ENCODE measurements at regions of chr10 and their contacts with region 1.

Region 1: DNA sequence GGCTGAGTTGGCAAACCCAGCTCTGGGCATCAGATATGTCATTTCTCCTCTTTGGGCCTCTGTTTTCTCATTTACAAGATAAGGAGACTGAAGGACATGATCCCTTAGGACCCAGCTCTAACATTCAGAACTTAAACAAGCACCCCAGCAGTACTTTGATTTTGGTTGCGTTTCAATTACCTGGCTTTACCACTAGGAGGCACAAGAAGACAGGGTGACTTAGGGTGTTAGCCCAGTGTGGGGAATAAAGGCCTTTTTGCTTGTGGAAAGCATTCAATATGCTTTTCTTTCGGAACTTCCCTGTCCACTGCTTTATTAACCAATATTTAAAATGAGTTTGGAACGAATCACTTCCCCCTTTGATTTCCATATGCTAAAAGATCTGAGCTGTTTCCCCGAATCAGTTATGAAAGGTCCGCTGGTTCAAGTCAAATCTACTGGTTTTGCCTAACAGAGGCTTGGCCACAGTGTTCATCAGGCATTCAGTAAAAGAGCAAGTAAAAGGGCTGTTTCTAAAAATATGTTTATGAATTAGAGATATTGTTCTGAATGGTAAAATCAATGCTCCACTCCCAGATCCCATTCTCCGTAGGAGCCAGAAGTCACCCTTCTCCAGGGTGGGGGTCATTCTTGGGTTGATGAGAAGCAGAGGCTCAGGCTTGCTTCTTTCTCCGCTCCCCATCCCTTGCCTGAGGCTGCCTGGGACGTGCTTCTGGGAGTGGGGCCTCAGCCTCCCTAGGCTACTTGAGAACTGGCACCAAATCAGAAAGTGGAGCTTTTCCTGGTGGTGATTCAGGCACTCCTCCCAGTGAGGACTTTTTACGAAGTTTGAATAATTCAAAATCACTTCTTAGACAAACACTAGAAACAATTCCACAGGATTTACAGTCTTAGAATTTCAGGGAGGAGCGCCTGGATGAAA is 105.5 kb downstream of the MYOF start:
- DNase-seq: no peak
- ATAC-seq: peak; percentile 90
- H3K4me3 Mint-ChIP-seq: no peak overlapping the region
- H3K27ac Mint-ChIP-seq: no peak overlapping the region
- H3K4me1 Mint-ChIP-seq: peaks cover 4% of the 10 kb centered on the region; the same call in 1 of the 2 replicates
- H3K27me3 Mint-ChIP-seq: no peaks in the 10 kb centered on the region
- CTCF ChIP-seq: peak; percentile 93

Region 2: GRCh38 chr10:93386631-93387369 is 10.2 kb after region 1 on chr10:
- CTCF ChIA-PET with region 1: interaction called, 19 read pairs
- POLR2A ChIA-PET with region 1: no interaction called
- DNase-seq: no peak
- ATAC-seq: peak; percentile 32; the same call in 1 of the 2 replicates
- H3K4me3 Mint-ChIP-seq: no peak overlapping the region
- H3K27ac Mint-ChIP-seq: no peak overlapping the region
- H3K4me1 Mint-ChIP-seq: peaks cover 21% of the 10 kb centered on the region
- H3K27me3 Mint-ChIP-seq: no peaks in the 10 kb centered on the region; the same call in 1 of the 2 replicates
- CTCF ChIP-seq: no peak

Region 3: GRCh38 chr10:93420091-93420490 is 43.5 kb after region 1 on chr10:
- CTCF ChIA-PET with region 1: interaction called, 12 read pairs
- POLR2A ChIA-PET with region 1: no interaction called
- DNase-seq: no peak
- ATAC-seq: peak; percentile 32
- H3K4me3 Mint-ChIP-seq: no peak overlapping the region
- H3K27ac Mint-ChIP-seq: peak overlapping the region; percentile 52; the same call in 1 of the 2 replicates
- H3K4me1 Mint-ChIP-seq: peaks cover 39% of the 10 kb centered on the region
- H3K27me3 Mint-ChIP-seq: no peaks in the 10 kb centered on the region
- CTCF ChIP-seq: no peak

Region 4: DNA sequence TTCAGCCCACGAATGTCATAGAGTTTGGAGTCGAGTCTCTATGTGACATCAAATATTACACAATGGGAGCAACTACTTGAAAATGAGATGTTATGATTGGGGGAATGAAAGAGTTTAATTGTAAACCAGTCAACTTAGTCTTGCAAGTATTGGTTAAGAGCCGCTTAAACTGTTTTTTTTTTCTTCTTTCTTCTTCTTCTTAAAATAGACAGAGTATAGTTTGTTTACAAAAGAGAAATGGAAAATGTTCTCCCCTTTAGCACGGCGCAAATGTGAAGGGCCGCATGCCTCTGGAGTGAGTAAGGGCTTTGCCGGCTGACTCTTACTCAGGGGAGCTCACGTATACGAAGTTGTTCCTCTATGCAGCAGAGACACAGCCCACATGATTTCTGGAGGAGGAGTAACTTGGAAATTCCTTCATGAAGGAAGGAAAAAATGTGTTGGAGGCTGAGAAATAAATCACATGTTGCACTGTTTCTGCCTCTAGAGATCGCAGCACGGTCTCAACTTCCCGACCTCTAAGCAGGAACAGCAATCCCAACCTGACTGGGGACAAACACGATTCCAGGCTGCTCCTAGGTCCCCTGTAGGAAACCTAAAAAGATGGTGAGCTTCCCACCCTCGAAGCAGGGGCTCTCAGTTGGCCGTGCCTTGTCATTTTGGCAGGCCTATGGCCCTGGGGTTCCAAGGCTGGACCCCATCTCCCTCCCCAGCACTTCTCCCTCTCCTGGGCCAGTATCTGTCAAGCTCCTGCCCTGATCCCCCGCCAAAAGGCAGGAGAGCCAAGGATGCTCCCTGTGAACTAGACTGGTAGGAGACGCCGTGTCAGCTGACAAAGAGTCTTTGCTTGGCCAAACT is 60.7 kb after region 1 on chr10:
- CTCF ChIA-PET with region 1: interaction called, 15 read pairs
- POLR2A ChIA-PET with region 1: no interaction called
- DNase-seq: peak; percentile 43
- ATAC-seq: peak; percentile 48
- H3K4me3 Mint-ChIP-seq: peak overlapping the region; percentile 68
- H3K27ac Mint-ChIP-seq: peak overlapping the region; percentile 98
- H3K4me1 Mint-ChIP-seq: peaks cover 78% of the 10 kb centered on the region
- H3K27me3 Mint-ChIP-seq: no peaks in the 10 kb centered on the region; the same call in 1 of the 2 replicates
- CTCF ChIP-seq: no peak

Region 5: GRCh38 chr10:93471110-93471651 is 94.5 kb after region 1 on chr10:
- CTCF ChIA-PET with region 1: interaction called, 12 read pairs
- POLR2A ChIA-PET with region 1: no interaction called
- DNase-seq: no peak
- ATAC-seq: peak; percentile 34; the same call in 1 of the 2 replicates
- H3K4me3 Mint-ChIP-seq: no peak overlapping the region
- H3K27ac Mint-ChIP-seq: no peak overlapping the region
- H3K4me1 Mint-ChIP-seq: peaks cover 12% of the 10 kb centered on the region
- H3K27me3 Mint-ChIP-seq: no peaks in the 10 kb centered on the region
- CTCF ChIP-seq: no peak

Region 6: DNA sequence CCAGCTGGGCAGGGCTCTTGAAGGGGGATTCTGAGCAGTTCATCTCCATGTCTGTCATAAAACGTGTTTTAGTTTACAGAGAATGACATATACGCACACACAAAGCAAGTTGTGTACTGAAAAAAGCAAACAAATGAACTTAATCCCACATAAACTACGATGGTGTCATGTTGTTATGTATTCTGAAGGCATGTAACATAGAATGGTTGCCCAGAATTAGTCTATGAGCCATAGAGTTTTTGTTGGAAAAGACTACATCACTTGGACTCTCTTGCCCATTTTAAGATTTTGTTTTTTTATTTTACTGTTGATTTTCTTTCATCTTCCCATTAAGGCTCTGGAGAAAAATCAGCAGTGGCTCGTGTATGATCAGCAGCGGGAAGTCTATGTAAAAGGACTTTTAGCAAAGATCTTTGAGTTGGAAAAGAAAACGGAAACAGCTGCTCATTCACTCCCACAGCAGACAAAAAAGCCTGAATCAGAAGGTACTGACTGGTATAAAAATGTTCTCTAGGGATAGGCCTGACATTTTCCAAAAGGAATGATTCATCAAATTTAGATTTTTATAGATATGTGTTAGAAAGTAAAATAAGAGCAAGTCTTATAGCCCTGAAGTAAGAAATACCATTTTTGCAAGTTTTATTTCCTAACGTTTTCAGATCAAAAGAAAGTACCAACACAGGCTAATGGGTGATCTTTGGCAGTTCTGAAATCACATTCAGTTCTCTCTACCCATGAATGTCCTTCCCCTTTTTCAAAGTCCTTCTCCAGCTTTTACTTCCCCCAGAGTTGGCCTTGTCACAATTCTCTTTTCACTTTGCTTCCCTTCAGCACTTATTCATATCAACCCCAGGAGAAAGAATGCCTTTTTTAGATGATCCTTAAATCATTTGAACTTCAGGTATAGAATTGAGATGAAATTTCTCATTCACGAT is 138.7 kb after region 1 on chr10:
- CTCF ChIA-PET with region 1: interaction called, 67 read pairs
- POLR2A ChIA-PET with region 1: no interaction called
- DNase-seq: no peak
- ATAC-seq: no peak
- H3K4me3 Mint-ChIP-seq: no peak overlapping the region
- H3K27ac Mint-ChIP-seq: no peak overlapping the region
- H3K4me1 Mint-ChIP-seq: peaks cover 5% of the 10 kb centered on the region
- H3K27me3 Mint-ChIP-seq: no peaks in the 10 kb centered on the region
- CTCF ChIP-seq: no peak

Region 7: DNA sequence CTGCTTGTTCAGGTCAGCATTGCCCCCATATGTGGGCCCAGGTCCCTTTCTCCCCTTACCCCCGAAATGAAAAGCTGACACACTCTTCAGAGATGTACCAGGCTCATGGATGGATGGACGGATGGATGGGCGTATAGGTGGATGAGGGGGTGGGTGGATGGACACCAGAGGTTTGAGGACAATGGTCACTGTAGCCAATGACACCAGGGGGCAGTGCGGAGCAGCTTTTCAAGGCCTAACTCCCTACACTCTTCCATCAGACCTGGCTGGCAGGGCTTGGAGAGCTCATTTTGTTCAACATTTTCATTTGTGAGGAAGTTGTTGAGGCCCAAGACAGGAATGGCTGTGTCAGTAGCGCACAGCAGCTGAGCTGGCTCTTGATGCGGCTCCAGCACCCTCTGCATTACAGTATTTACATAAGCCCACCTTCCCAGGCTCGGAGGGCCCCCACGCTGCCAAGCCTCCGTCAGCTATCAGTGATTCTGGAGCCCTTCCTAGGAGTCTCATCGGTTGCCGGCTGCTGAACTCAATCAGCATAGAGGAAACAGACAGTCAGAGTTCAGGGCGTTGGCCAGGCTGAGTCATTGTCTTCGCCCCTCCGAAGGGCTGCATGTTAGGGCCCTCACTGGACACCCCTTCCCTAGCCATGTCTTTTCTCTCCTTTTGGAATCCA is 178.3 kb after region 1 on chr10:
- CTCF ChIA-PET with region 1: interaction called, 11 read pairs
- POLR2A ChIA-PET with region 1: no interaction called
- DNase-seq: peak; percentile 85
- ATAC-seq: peak; percentile 95
- H3K4me3 Mint-ChIP-seq: 0 out of 2 replicates have a peak overlapping the region, but pooled peaks have one; percentile 0
- H3K27ac Mint-ChIP-seq: no peak overlapping the region
- H3K4me1 Mint-ChIP-seq: peaks cover 11% of the 10 kb centered on the region
- H3K27me3 Mint-ChIP-seq: no peaks in the 10 kb centered on the region
- CTCF ChIP-seq: peak; percentile 71